IMR-90 (cell line): ENCODE measurements at regions of chr15 and their contacts with region 1.

Region 1: DNA sequence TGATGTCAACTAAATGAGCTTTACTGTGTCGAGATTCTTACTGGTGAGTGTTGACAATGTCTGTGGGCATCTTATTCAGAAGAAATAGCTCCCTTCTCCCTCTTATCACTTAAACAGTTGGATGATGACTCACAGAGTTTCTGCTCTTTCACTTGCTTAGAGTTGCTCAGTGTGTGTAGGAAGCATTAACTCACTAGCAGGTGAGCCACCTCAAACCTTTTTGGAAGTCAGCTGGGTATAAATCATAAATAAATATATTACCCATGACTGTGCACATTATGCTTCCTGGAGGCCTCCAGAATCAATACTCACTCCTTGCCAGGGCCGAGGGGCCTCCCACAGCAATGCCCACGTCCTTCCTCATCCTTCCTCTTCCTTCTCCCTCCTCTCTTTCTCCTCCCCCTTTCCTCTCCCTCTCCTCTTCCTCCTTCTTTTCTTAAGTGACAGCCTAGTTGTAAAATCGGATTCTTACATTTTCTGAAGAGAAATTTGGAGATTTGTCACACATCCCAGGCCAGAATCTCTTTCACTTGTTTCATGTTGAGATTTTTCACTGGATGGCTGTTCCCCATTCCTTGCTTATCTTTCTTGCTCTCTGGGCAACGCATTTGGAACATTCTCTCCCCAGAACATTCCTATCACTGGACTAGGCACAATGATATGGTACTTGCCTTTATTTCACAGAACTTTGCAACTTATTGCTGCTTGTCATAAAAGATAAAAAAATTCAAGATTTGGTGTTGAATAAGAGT is 17.5 kb downstream of the SHC4 start:
- DNase-seq: peak; percentile 90
- ATAC-seq: peak; percentile 95
- H3K4me3 ChIP-seq: no peak overlapping the region
- H3K27ac ChIP-seq: no peak overlapping the region
- H3K4me1 ChIP-seq: peaks cover 2% of the 10 kb centered on the region; the same call in 1 of the 2 replicates
- H3K27me3 ChIP-seq: no peaks in the 10 kb centered on the region
- CTCF ChIP-seq: no peak
- POLR2A ChIP-seq: no peak
- RAD21 ChIP-seq: peak; percentile 19; the same call in 1 of the 2 replicates

Region 2: DNA sequence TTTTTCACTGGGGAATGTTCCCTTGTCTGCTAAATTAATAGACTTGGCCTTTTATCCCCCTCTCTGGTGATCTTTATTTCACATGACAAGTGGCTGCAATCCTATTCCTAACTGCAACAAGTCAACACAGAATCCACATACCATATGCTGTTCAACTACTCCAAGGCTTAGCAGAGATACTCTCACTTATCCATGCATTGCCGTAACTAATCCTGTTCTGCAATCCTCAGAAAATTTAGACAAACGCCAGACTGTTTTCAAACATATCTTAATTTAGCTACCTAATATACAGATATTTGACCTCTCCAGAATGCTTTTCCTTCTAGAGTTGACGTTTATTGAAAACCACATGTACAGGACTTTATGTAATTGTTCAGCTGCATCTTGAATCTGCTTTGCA is 30.4 kb before region 1 on chr15:
- CTCF ChIA-PET with region 1: no interaction called
- POLR2A ChIA-PET with region 1: no interaction called
- dilution Hi-C with region 1: no loop called
- in situ Hi-C with region 1: no loop called
- intact Hi-C with region 1: loop called (anchors 2 kb)
- DNase-seq: no peak
- ATAC-seq: no peak; the same call in 1 of the 2 replicates
- H3K4me3 ChIP-seq: no peak overlapping the region
- H3K27ac ChIP-seq: no peak overlapping the region
- H3K4me1 ChIP-seq: peaks cover 3% of the 10 kb centered on the region
- H3K27me3 ChIP-seq: no peaks in the 10 kb centered on the region
- CTCF ChIP-seq: no peak
- POLR2A ChIP-seq: no peak
- RAD21 ChIP-seq: no peak